ENCODE measurements at regions of chr11 and their contacts with region 1.

Region 1: GRCh38 chr11:68206187-68206601 is 6.9 kb downstream of the KMT5B start:
- DNase-seq: peak; percentile 31 to 67 (median 40)
- ATAC-seq: peak; percentile 71
- H3K4me3 ChIP-seq: no peak overlapping the region
- H3K27ac ChIP-seq: no peak overlapping the region
- H3K4me1 ChIP-seq: peaks cover 0 to 6% of the 10 kb centered on the region in 2 experiments; a peak in 2 of 5 replicates
- H3K27me3 ChIP-seq: no peaks in the 10 kb centered on the region
- CTCF ChIP-seq: peak; percentile 68 to 82 (median 76)
- EP300 ChIP-seq: no peak
- POLR2A ChIP-seq: no peak
- RAD21 ChIP-seq: peak; percentile 52 to 76

Region 2: GRCh38 chr11:68009391-68010089 is 196.7 kb before region 1 on chr11:
- CTCF ChIA-PET with region 1: no interaction called
- POLR2A ChIA-PET with region 1: no interaction called
- in situ Hi-C with region 1: no loop called
- intact Hi-C with region 1: loop called (anchors 1 kb)
- DNase-seq: peak in 2 of 4 experiments; percentile 37 to 72
- ATAC-seq: peak; percentile 52
- H3K4me3 ChIP-seq: no peak overlapping the region; the same call in 1 of the 2 replicates
- H3K27ac ChIP-seq: peak overlapping the region; percentile 64; the same call in 2 of the 3 replicates
- H3K4me1 ChIP-seq: peaks cover 26 to 60% of the 10 kb centered on the region in 2 experiments
- H3K27me3 ChIP-seq: no peaks in the 10 kb centered on the region
- CTCF ChIP-seq: peak; percentile 27 to 74 (median 36); a peak in 3 of 6 replicates
- EP300 ChIP-seq: peak; percentile 73
- POLR2A ChIP-seq: no peak
- RAD21 ChIP-seq: peak; percentile 63 to 74

Region 3: GRCh38 chr11:68076371-68077042 is 129.7 kb before region 1 on chr11:
- CTCF ChIA-PET with region 1: no interaction called
- POLR2A ChIA-PET with region 1: interaction called, 3 read pairs
- in situ Hi-C with region 1: no loop called
- intact Hi-C with region 1: loop called (anchors 1 kb)
- DNase-seq: peak in 3 of 4 experiments; percentile 21 to 35 (median 32)
- ATAC-seq: peak; percentile 77
- H3K4me3 ChIP-seq: no peak overlapping the region
- H3K27ac ChIP-seq: no peak overlapping the region
- H3K4me1 ChIP-seq: no peaks in the 10 kb centered on the region
- H3K27me3 ChIP-seq: no peaks in the 10 kb centered on the region
- CTCF ChIP-seq: peak; percentile 33 to 46 (median 44); a peak in 3 of 6 replicates
- EP300 ChIP-seq: no peak
- POLR2A ChIP-seq: no peak
- RAD21 ChIP-seq: peak; percentile 10 to 53; a peak in 2 of 4 replicates

Region 4: DNA sequence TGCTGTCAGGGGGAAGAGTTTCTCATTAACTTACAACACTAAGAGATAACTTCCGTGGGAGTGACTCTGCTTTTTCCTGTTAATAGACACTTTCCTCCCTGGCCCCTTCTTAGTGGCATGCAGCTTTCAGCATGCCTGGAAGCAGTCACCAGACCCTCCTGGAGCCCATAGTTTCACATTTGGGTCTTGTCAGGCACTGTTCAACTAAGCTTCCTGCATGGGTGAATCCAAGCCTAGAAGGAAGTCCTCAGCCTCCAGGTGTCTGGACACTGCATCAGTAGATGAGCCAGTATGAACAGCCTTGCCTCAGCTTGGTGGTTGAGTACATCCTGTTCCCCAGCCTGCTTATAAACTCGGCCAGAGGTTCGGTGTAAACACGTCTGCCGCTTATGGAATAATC is 322.4 kb after region 1 on chr11:
- CTCF ChIA-PET with region 1: no interaction called
- POLR2A ChIA-PET with region 1: no interaction called
- in situ Hi-C with region 1: no loop called
- intact Hi-C with region 1: no loop called
- DNase-seq: no peak
- ATAC-seq: peak; percentile 51
- H3K4me3 ChIP-seq: no peak overlapping the region
- H3K27ac ChIP-seq: no peak overlapping the region
- H3K4me1 ChIP-seq: no peaks in the 10 kb centered on the region; a peak in 1 of 5 replicates
- H3K27me3 ChIP-seq: no peaks in the 10 kb centered on the region
- CTCF ChIP-seq: no peak
- EP300 ChIP-seq: no peak
- POLR2A ChIP-seq: no peak
- RAD21 ChIP-seq: no peak

Measured in K562 (cell line).